ENCODE measurements at regions of chr9 and their contacts with region 1.

Region 1: DNA sequence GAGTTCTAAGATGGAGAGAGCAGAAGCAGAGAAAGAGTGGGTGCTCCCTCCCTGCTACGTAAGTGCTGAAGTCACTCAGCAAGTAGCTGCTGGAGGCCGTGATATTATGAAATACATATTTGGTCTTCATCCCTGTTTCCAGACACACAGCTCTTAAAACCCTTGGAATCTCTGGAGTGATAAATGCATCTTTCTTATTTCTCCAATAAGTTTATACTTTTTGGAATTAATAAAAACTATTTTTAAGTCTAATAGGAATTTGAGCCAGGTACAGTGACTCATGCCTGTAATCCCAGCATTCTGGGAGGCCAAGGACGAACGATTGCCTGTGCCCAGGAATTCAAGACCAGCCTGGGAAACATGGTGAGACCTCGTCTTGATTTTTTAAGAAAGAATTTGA is 60.6 kb downstream of the AUH start:
- DNase-seq: no peak
- ATAC-seq: peak; percentile 34 to 42
- H3K4me3 ChIP-seq: no peak overlapping the region
- H3K27ac ChIP-seq: peak overlapping the region; percentile 78 to 90 (median 84)
- H3K4me1 ChIP-seq: peaks cover 61 to 68% of the 10 kb centered on the region in 2 donors
- H3K27me3 ChIP-seq: no peaks in the 10 kb centered on the region
- CTCF ChIP-seq: no peak
- POLR2A ChIP-seq: no peak

Region 2: DNA sequence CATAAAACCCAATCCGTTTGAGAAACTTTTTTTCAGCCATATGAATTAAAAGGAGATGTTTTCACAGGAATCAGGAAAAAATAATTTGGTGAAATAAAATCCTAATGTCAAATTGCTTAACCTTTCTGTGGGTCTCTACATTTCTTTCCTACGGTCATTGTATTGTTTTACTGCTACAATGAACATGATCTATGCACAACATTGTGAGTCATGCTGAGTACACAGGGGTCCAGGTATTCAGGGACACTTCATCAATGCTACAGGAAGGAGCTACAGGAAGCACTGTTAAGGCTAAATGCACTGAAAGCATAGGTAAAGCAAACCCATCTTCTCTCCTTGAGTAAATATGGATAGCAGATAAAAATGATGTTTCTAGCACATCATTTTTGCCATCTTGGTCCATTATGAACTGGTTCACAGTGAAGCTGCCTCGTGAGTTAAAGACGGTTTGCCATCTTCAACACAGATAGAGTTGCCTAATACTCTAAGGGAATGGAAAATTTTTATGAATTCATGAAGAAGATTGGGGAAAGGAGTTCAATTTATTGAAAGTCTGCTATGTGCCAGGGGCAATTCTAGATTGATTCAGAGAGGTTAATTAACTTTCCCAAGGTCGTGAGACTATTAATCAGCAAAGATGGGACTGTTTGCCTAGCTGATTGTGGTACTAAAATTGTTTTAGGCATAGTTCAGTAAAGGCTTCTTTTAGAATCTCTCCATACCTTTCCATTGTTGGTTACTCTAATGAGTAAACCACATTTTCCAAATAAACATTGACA is 744.1 kb before region 1 on chr9:
- in situ Hi-C with region 1: no loop called
- intact Hi-C with region 1: no loop called
- DNase-seq: no peak
- ATAC-seq: no peak
- H3K4me3 ChIP-seq: no peak overlapping the region
- H3K27ac ChIP-seq: no peak overlapping the region
- H3K4me1 ChIP-seq: no peaks in the 10 kb centered on the region
- H3K27me3 ChIP-seq: no peaks in the 10 kb centered on the region
- CTCF ChIP-seq: no peak
- POLR2A ChIP-seq: no peak

Region 3: DNA sequence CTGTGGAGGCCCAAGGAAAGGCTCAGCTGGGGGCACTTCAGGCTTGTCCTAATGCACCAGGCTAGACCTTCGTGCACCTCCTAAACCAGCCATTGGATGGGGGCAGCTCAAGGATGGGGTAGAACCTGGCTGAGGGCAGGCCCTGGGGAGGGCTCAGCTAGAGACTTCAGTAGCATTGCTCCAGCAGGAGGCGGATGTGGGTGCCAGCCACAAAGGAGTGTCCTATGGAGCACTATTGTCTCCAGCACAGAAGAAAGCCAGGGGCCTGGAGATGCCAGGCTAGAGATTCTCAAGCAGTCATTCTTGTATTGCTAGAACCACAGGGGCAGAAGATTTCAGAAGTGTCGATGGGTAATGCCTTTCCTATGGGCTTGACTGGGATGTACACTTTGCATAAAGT is 367.7 kb before region 1 on chr9:
- in situ Hi-C with region 1: no loop called
- intact Hi-C with region 1: no loop called
- DNase-seq: no peak
- ATAC-seq: no peak
- H3K4me3 ChIP-seq: no peak overlapping the region
- H3K27ac ChIP-seq: no peak overlapping the region
- H3K4me1 ChIP-seq: no peaks in the 10 kb centered on the region
- H3K27me3 ChIP-seq: no peaks in the 10 kb centered on the region
- CTCF ChIP-seq: no peak
- POLR2A ChIP-seq: no peak

Region 4: GRCh38 chr9:91060503-91061343 is 240.4 kb before region 1 on chr9:
- in situ Hi-C with region 1: no loop called
- intact Hi-C with region 1: loop called (anchors 5 kb)
- DNase-seq: peak; percentile 70 to 81
- ATAC-seq: peak; percentile 71 to 73
- H3K4me3 ChIP-seq: no peak overlapping the region
- H3K27ac ChIP-seq: peak overlapping the region; percentile 82 to 87 (median 84)
- H3K4me1 ChIP-seq: peaks cover 42 to 43% of the 10 kb centered on the region in 2 donors
- H3K27me3 ChIP-seq: no peaks in the 10 kb centered on the region
- CTCF ChIP-seq: no peak
- POLR2A ChIP-seq: peak in 1 of 2 donors; percentile 12

Region 5: DNA sequence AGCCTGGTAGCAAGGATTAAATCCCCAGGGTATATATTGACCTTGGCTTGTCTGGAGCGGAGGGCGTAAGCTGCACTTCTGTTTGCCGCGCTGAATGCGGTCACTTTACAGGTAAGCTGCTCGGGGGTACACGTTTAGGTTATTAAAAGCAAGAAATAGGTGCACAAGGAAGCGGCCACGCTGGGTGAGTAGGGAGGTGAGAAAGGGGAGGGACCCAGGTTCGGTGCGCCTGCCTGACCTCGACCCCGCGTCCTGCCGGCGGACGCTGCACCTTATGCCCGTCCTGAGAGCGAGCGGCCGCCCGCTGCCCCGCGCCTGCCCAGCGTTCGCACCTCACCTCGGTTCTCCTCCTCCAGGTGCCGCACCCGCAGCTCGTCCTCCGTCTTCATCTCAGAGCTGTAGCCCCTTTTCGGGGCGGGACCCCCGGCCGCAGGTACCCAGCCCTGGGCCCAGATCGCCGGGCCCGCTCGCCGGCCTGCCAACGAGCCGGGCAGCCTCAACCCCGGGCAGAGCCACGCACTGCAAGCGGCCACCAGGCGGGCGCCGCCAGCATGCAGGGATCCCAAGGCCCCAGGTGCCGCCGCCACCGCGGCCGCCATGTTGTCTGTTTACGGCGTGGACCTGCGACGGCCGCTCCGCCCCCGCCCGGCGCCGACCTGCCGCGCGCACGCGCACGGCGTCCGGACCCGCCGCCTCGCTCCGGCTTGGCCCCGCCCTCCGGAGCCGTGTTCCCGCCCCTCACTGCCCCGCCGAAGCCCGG is 60.3 kb after region 1 on chr9 and contains the start of gene AUH:
- in situ Hi-C with region 1: no loop called
- intact Hi-C with region 1: loop called (anchors 5 kb)
- DNase-seq: peak; percentile 69 to 81
- ATAC-seq: peak; percentile 93 to 94
- H3K4me3 ChIP-seq: peak within 1 kb of the TSS; percentile 76 to 97 (median 94)
- H3K27ac ChIP-seq: peak within 1 kb of the TSS; percentile 90 to 96 (median 93)
- H3K4me1 ChIP-seq: peaks cover 29 to 43% of the 10 kb centered on the region in 2 donors
- H3K27me3 ChIP-seq: no peaks in the 10 kb centered on the region
- CTCF ChIP-seq: peak in 1 of 5 experiments; percentile 29
- POLR2A ChIP-seq: peak; percentile 61 to 89
- total RNA-seq, gene AUH: 17.1 to 28.2 (median 20.8) TPM

Region 6: DNA sequence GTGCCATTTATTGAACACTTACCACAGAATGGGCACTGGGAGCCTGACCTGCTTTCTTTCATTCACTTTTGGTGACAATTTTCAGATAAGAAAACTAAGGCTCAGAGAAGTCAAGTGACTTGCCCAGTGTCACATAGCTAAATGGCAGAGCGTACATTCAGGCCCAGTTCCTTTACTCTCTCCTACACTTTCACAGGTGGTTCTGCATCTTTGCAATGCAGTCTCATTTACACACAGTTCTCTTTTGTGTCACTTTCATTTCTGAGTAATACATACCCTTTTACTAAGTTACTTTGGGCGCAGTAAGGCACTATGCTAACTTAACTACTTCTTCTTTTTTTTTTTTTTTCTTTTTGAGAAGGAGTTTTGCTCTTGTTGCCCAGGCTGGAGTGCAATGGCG is 114.1 kb after region 1 on chr9:
- in situ Hi-C with region 1: no loop called
- intact Hi-C with region 1: no loop called
- DNase-seq: no peak
- ATAC-seq: no peak
- H3K4me3 ChIP-seq: no peak overlapping the region
- H3K27ac ChIP-seq: no peak overlapping the region
- H3K4me1 ChIP-seq: peaks cover 17 to 39% of the 10 kb centered on the region in 2 donors
- H3K27me3 ChIP-seq: no peaks in the 10 kb centered on the region
- CTCF ChIP-seq: no peak
- POLR2A ChIP-seq: no peak

Region 7: GRCh38 chr9:91443321-91443993 is 142.3 kb after region 1 on chr9:
- in situ Hi-C with region 1: no loop called
- intact Hi-C with region 1: no loop called
- DNase-seq: no peak
- ATAC-seq: no peak
- H3K4me3 ChIP-seq: no peak overlapping the region
- H3K27ac ChIP-seq: no peak overlapping the region
- H3K4me1 ChIP-seq: no peaks in the 10 kb centered on the region
- H3K27me3 ChIP-seq: no peaks in the 10 kb centered on the region
- CTCF ChIP-seq: no peak
- POLR2A ChIP-seq: no peak